ENCODE measurements at regions of chr2 and their contacts with region 1.

Region 1: GRCh38 chr2:66579186-66580126 is 144.5 kb downstream of the MEIS1 start:
- DNase-seq: no peak
- ATAC-seq: no peak
- H3K4me3 ChIP-seq: no peak overlapping the region
- H3K4me3 Mint-ChIP-seq: no peak overlapping the region
- H3K27ac ChIP-seq: no peak overlapping the region
- H3K27ac Mint-ChIP-seq: no peak overlapping the region
- H3K4me1 ChIP-seq: peaks cover 41 to 57% of the 10 kb centered on the region in 2 donors
- H3K4me1 Mint-ChIP-seq: peaks cover 18% of the 10 kb centered on the region
- H3K27me3 ChIP-seq: peaks cover 0 to 80% (median 68%) of the 10 kb centered on the region in 4 experiments
- H3K27me3 Mint-ChIP-seq: peaks cover 48% of the 10 kb centered on the region
- CTCF ChIP-seq: no peak

Region 2: DNA sequence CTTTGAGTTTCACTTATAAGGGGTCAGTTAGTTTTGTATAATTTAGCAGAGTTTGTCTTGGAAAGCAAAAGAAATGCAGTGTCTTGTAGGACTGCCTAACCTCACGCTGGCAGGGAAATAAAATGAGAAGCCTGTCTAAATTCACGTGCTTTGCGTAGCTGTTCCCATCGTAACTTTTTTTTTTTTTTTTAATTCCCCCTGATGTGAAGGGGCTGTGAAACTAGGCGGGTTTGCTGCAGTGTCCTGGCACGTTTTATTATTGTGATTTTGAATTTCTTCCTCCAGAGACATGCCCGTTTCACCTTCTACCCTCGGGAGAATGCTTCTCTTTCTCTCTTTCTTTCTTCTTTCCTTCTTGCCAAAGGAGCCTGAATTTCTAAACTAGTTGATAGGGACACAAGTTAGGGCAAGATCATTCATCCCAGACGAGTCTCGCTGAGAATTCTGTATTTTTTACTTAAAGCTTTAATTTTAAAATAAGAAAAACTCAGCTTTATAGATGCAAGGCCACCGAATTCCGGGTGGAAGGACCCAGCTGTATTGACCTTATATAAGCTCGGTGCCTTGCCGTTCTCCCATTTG is 142.3 kb before region 1 on chr2:
- CTCF ChIA-PET with region 1: no interaction called
- POLR2A ChIA-PET with region 1: interaction called, 10 read pairs
- intact Hi-C with region 1: no loop called
- DNase-seq: no peak
- ATAC-seq: no peak
- H3K4me3 ChIP-seq: no peak overlapping the region
- H3K4me3 Mint-ChIP-seq: peak overlapping the region; percentile 6
- H3K27ac ChIP-seq: no peak overlapping the region
- H3K27ac Mint-ChIP-seq: no peak overlapping the region
- H3K4me1 ChIP-seq: peaks cover 44 to 67% of the 10 kb centered on the region in 2 donors
- H3K4me1 Mint-ChIP-seq: peaks cover 48% of the 10 kb centered on the region
- H3K27me3 ChIP-seq: peaks cover 0 to 78% (median 54%) of the 10 kb centered on the region in 4 experiments
- H3K27me3 Mint-ChIP-seq: peaks cover 83% of the 10 kb centered on the region
- CTCF ChIP-seq: no peak